Activated T-helper 1 cell treated with anti-CD3 and anti-CD28 coated beads, Interleukin-12 subunit alpha, Interleukin-12 subunit beta, Interleukin-2, Interleukin-4 antibody, amounts not matched to agents 30 ng/mL and 10 ng/mL and 1 ng/mL, durations not matched to agents 14 hours and 24 hours and 36 hours (primary cell): ENCODE measurements at regions of chr11 and their contacts with region 1.

Region 1: GRCh38 chr11:63838678-63839507 is at the start of gene MARK2:
- DNase-seq: peak; percentile 99
- H3K4me3 Mint-ChIP-seq: peak within 1 kb of the TSS; percentile 88
- H3K27ac Mint-ChIP-seq: peak within 1 kb of the TSS; percentile 83
- H3K4me1 Mint-ChIP-seq: peaks cover 59% of the 10 kb centered on the region
- H3K27me3 Mint-ChIP-seq: peaks cover 5% of the 10 kb centered on the region
- total RNA-seq, gene MARK2: 44.7 and 46.0 TPM in 2 replicates

Region 2: GRCh38 chr11:63813035-63813562 is 25.8 kb before region 1 on chr11 and contains the start of gene SPINDOC:
- intact Hi-C with region 1: loop called (anchors 1 kb)
- DNase-seq: peak; percentile 78
- H3K4me3 Mint-ChIP-seq: peak within 1 kb of the TSS; percentile 88
- H3K27ac Mint-ChIP-seq: peak within 1 kb of the TSS; percentile 55
- H3K4me1 Mint-ChIP-seq: peaks cover 34% of the 10 kb centered on the region
- H3K27me3 Mint-ChIP-seq: no peaks in the 10 kb centered on the region
- total RNA-seq, gene SPINDOC: 60.0 and 64.3 TPM in 2 replicates

Region 3: DNA sequence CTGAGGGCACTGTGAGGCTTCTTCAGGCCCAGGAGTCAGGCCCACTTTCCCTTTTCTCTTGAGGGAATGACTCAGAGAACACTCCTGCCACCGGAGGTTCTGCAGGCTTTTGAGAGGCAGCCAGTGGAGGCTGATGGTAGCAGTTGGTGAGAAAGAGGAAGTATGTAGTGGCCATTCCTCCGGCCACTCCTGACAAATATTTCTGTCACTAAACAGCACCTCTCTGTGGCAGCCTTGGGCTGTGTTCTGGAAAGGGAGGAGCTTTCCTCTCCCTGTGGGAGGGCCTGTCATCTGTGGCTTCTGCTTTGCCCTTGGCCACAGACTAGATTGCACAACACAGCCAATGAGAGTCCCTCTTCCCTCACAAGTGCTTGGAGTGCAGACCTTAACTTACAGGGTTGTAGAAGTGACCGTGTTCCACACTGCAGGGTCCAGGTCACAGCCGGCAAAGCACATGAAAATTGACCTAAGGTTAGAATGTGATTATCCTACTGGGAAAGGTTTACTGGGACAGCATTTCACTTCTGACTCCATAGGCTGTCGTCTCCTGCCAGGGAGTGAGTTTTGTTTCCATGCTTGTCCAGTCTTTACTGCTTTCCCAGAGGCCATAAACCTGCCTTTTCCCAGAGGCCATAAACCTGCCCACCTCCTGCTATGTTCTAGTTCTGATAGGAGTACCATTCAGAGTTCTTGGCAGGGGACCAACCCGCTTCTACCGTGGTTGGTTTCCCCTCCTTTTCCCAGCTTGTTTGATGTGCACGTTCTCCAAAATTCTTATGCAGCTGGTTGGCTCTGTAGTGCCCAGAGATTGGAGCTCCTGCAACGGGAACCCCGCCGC is 33.3 kb after region 1 on chr11:
- intact Hi-C with region 1: loop called (anchors 1 kb)
- DNase-seq: peak; percentile 34
- H3K4me3 Mint-ChIP-seq: peak overlapping the region; percentile 33
- H3K27ac Mint-ChIP-seq: peak overlapping the region; percentile 18
- H3K4me1 Mint-ChIP-seq: peaks cover 60% of the 10 kb centered on the region
- H3K27me3 Mint-ChIP-seq: no peaks in the 10 kb centered on the region

Region 4: GRCh38 chr11:63938479-63939396 is 99.8 kb after region 1 on chr11 and contains the start of gene NAA40:
- intact Hi-C with region 1: loop called (anchors 1 kb)
- DNase-seq: peak; percentile 89
- H3K4me3 Mint-ChIP-seq: peak within 1 kb of the TSS; percentile 87
- H3K27ac Mint-ChIP-seq: peak within 1 kb of the TSS; percentile 82
- H3K4me1 Mint-ChIP-seq: peaks cover 7% of the 10 kb centered on the region
- H3K27me3 Mint-ChIP-seq: no peaks in the 10 kb centered on the region
- total RNA-seq, gene NAA40: 25.3 and 31.6 TPM in 2 replicates

Region 5: GRCh38 chr11:63986156-63986931 is 147.5 kb after region 1 on chr11 and contains the start of gene OTUB1:
- intact Hi-C with region 1: loop called (anchors 1 kb)
- DNase-seq: peak; percentile 86
- H3K4me3 Mint-ChIP-seq: peak within 1 kb of the TSS; percentile 97
- H3K27ac Mint-ChIP-seq: peak within 1 kb of the TSS; percentile 96
- H3K4me1 Mint-ChIP-seq: peaks cover 32% of the 10 kb centered on the region
- H3K27me3 Mint-ChIP-seq: no peaks in the 10 kb centered on the region
- total RNA-seq, gene OTUB1: 104 and 114 TPM in 2 replicates

Region 6: DNA sequence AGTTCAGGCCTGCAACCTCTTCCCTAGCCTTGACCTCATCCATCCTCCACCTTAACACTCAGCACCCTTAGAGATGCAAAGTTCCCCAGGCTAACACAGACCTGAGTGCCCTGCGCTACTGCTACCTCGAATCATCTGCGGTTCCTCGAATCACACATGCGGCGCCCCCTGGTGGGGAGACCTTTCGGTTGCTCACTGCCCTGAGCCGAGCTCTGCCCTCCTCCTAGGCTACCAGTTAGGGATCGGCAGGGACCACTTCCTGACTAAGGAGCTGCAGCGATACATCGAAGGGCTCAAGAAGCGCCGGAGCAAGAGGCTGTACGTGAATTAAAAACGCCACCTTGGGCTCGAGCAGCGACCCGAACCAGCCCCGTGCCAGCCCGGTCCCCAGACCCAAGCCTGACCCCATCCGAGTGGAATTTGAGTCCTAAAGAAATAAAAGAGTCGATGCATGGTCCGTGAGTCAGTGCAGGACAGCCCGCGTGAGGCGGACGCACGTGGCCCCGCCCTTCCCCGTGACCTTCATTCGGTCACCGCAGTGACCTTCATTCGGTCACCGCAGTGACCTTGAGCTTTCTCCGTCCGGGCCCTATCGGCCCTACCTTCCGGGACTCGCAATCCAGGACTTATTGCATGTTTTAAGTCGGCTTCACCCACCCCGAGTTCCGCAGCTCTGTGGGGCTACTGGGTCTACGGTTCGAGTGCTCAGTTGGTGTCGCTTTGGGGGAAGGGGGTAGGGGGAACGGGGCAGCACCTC is 465.6 kb after region 1 on chr11:
- intact Hi-C with region 1: loop called (anchors 1 kb)
- DNase-seq: peak; percentile 86
- H3K4me3 Mint-ChIP-seq: peak overlapping the region; percentile 91
- H3K27ac Mint-ChIP-seq: peak overlapping the region; percentile 98
- H3K4me1 Mint-ChIP-seq: peaks cover 18% of the 10 kb centered on the region
- H3K27me3 Mint-ChIP-seq: peaks cover 19% of the 10 kb centered on the region